ENCODE measurements at regions of chr12 and their contacts with region 1.

Region 1: GRCh38 chr12:55073043-55074022 is 52.9 kb upstream of the OR9K2 start:
- DNase-seq: peak; percentile 47 to 88 (median 85)
- ATAC-seq: peak; percentile 60
- H3K4me3 ChIP-seq: no peak overlapping the region
- H3K4me3 Mint-ChIP-seq: no peak overlapping the region
- H3K27ac ChIP-seq: no peak overlapping the region
- H3K27ac Mint-ChIP-seq: no peak overlapping the region
- H3K4me1 ChIP-seq: no peaks in the 10 kb centered on the region
- H3K4me1 Mint-ChIP-seq: peaks cover 2% of the 10 kb centered on the region
- H3K27me3 ChIP-seq: no peaks in the 10 kb centered on the region
- H3K27me3 Mint-ChIP-seq: peaks cover 23% of the 10 kb centered on the region
- CTCF ChIP-seq: peak; percentile 79

Region 2: DNA sequence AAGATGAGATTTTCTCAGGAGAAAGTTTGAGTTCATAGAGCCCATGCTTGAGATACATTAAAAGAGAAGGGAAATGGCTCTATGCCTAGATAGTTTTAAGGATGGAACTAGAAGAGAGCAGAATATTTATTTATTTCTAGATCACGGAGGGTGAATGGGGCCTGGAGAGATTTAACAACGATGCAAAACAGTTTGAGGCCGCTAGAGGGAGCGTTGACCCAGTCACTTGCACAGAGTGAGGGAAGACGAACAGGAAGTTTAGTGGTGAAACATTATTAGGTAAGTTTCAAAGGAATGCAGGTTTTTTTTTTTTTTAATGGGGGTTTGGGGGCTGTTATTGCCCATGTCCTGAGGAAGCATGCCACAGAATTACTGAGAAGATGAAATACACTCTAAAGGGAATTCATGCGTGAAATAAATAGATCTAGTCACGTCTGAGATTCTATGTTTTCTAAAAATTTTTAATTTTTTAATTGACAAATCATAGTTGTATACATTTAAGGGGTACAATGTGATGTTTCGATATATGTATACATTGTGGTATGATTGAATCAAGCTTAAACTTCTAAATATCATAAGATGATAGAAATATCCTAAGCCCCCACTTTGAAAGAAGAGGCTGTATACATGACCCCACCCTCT is 470.0 kb before region 1 on chr12:
- CTCF ChIA-PET with region 1: interaction called, 8 read pairs
- POLR2A ChIA-PET with region 1: no interaction called
- intact Hi-C with region 1: loop called (anchors 5 to 10 kb)
- DNase-seq: peak; percentile 34 to 77 (median 66)
- ATAC-seq: peak; percentile 98
- H3K4me3 ChIP-seq: no peak overlapping the region
- H3K4me3 Mint-ChIP-seq: no peak overlapping the region
- H3K27ac ChIP-seq: no peak overlapping the region
- H3K27ac Mint-ChIP-seq: no peak overlapping the region
- H3K4me1 ChIP-seq: no peaks in the 10 kb centered on the region
- H3K4me1 Mint-ChIP-seq: peaks cover 4% of the 10 kb centered on the region
- H3K27me3 ChIP-seq: peaks cover 0 to 1% of the 10 kb centered on the region in 2 experiments
- H3K27me3 Mint-ChIP-seq: peaks cover 3% of the 10 kb centered on the region
- CTCF ChIP-seq: peak; percentile 82

Region 3: DNA sequence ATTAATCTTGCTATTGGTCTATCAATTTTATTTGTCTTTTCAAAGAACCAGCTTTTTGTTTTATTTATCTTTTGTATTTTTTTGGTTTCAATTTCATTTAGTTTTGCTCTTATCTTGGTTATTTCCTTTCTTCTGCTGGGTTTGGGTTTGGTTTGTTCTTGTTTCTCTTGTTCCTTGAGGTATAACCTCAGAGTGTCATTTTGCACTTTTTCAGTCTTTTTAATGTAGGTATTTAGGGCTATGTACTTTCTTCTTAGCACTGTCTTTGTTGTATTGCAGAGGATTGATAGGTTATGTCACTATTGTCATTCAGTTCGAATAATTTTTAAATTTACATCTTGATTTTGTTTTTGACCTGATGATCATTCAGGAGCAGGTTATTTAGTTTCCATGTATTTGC is 332.5 kb before region 1 on chr12:
- CTCF ChIA-PET with region 1: interaction called, 40 read pairs
- POLR2A ChIA-PET with region 1: no interaction called
- intact Hi-C with region 1: no loop called
- DNase-seq: peak in 2 of 9 experiments; percentile 25 to 59
- ATAC-seq: peak; percentile 69
- H3K4me3 ChIP-seq: no peak overlapping the region
- H3K4me3 Mint-ChIP-seq: peak overlapping the region; percentile 59
- H3K27ac ChIP-seq: peak overlapping the region in 1 of 2 experiments; percentile 70
- H3K27ac Mint-ChIP-seq: peak overlapping the region; percentile 77
- H3K4me1 ChIP-seq: peaks cover 56% of the 10 kb centered on the region
- H3K4me1 Mint-ChIP-seq: peaks cover 84% of the 10 kb centered on the region
- H3K27me3 ChIP-seq: no peaks in the 10 kb centered on the region
- H3K27me3 Mint-ChIP-seq: no peaks in the 10 kb centered on the region
- CTCF ChIP-seq: no peak

Region 4: GRCh38 chr12:54859502-54859901 is 213.8 kb before region 1 on chr12:
- CTCF ChIA-PET with region 1: interaction called, 63 read pairs
- POLR2A ChIA-PET with region 1: no interaction called
- intact Hi-C with region 1: loop called (anchors 1 kb)
- DNase-seq: no peak
- ATAC-seq: no peak
- H3K4me3 ChIP-seq: no peak overlapping the region
- H3K4me3 Mint-ChIP-seq: no peak overlapping the region
- H3K27ac ChIP-seq: no peak overlapping the region
- H3K27ac Mint-ChIP-seq: no peak overlapping the region
- H3K4me1 ChIP-seq: no peaks in the 10 kb centered on the region
- H3K4me1 Mint-ChIP-seq: no peaks in the 10 kb centered on the region
- H3K27me3 ChIP-seq: no peaks in the 10 kb centered on the region
- H3K27me3 Mint-ChIP-seq: peaks cover 15% of the 10 kb centered on the region
- CTCF ChIP-seq: no peak

Region 5: DNA sequence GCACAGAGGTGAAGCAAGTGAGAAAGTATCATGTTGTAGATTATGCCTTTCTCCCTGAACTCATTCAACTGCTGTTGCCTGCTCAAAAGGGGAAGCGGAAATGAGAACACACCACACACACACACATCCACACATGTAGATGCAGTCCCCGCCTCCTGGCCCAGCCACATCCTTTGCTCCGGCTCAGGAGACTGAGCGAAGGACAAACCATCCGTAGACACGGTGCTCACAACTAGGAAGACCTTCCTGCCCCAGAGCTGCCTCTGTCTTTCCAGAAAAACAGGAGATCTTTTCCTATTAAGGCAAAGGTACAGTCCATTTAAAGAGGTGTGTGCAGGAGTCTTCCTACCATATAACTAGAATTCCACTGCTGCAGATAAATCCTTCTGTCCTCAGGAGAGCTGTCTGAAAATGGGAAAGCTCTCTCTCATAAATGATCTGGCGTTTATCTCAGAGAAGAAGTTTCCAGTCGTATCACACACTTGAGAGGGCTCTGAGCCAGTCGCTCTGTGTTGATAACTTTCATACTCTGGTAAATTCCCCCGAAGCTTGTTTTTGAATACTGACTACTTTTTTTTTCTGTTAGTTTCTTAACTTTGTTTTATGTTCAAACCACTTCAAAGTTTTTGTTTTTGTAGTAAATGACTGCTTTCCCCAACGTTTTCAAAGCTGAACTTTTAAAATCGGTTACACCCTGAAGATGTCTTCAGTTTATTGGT is 88.5 kb before region 1 on chr12 and contains the start of gene TESPA1:
- CTCF ChIA-PET with region 1: interaction called, 67 read pairs
- POLR2A ChIA-PET with region 1: interaction called, 15 read pairs
- intact Hi-C with region 1: no loop called
- DNase-seq: peak; percentile 64 to 94 (median 87)
- ATAC-seq: peak; percentile 87
- H3K4me3 ChIP-seq: peak within 1 kb of the TSS; percentile 52 to 59
- H3K4me3 Mint-ChIP-seq: peak within 1 kb of the TSS; percentile 89
- H3K27ac ChIP-seq: peak within 1 kb of the TSS; percentile 87 to 88
- H3K27ac Mint-ChIP-seq: peak within 1 kb of the TSS; percentile 98
- H3K4me1 ChIP-seq: peaks cover 61% of the 10 kb centered on the region
- H3K4me1 Mint-ChIP-seq: peaks cover 93% of the 10 kb centered on the region
- H3K27me3 ChIP-seq: no peaks in the 10 kb centered on the region
- H3K27me3 Mint-ChIP-seq: no peaks in the 10 kb centered on the region
- CTCF ChIP-seq: no peak
- total RNA-seq, gene TESPA1: 70.9 to 84.8 TPM

Region 6: DNA sequence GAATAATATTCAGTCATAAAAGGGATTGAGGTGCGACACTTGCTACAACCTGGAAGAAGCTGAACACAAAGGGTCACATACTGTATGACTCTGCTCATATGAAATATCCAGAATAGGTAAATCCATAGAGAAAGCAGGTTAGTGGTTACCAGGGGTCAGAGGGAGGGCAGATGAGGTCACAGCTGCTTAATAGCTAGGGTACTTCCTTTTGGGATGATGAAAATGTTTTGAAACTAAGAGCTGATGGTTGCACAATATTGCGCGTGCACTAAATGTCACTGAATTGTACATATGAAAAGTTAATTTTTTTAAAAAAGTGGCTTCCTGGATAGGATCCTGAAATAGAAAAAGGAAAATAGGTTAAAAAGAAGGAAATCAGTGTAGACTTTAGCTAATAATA is 29.8 kb before region 1 on chr12:
- CTCF ChIA-PET with region 1: interaction called, 18 read pairs
- POLR2A ChIA-PET with region 1: no interaction called
- intact Hi-C with region 1: no loop called
- DNase-seq: peak in 1 of 9 experiments; percentile 16
- ATAC-seq: no peak
- H3K4me3 ChIP-seq: no peak overlapping the region
- H3K4me3 Mint-ChIP-seq: no peak overlapping the region
- H3K27ac ChIP-seq: no peak overlapping the region
- H3K27ac Mint-ChIP-seq: no peak overlapping the region
- H3K4me1 ChIP-seq: peaks cover 2% of the 10 kb centered on the region
- H3K4me1 Mint-ChIP-seq: peaks cover 11% of the 10 kb centered on the region
- H3K27me3 ChIP-seq: no peaks in the 10 kb centered on the region
- H3K27me3 Mint-ChIP-seq: peaks cover 1% of the 10 kb centered on the region
- CTCF ChIP-seq: no peak

Region 7: GRCh38 chr12:55420307-55420962 is 347.1 kb after region 1 on chr12:
- CTCF ChIA-PET with region 1: no interaction called
- POLR2A ChIA-PET with region 1: no interaction called
- intact Hi-C with region 1: no loop called
- DNase-seq: no peak
- ATAC-seq: no peak
- H3K4me3 ChIP-seq: no peak overlapping the region
- H3K4me3 Mint-ChIP-seq: no peak overlapping the region
- H3K27ac ChIP-seq: no peak overlapping the region
- H3K27ac Mint-ChIP-seq: no peak overlapping the region
- H3K4me1 ChIP-seq: no peaks in the 10 kb centered on the region
- H3K4me1 Mint-ChIP-seq: peaks cover 2% of the 10 kb centered on the region
- H3K27me3 ChIP-seq: no peaks in the 10 kb centered on the region
- H3K27me3 Mint-ChIP-seq: peaks cover 52% of the 10 kb centered on the region
- CTCF ChIP-seq: no peak

Measured in CD8-positive, alpha-beta T cell (primary cell).